Head of caudate nucleus (tissue), 42 donors: ENCODE measurements at regions of chr18 and their contacts with region 1.

Region 1: DNA sequence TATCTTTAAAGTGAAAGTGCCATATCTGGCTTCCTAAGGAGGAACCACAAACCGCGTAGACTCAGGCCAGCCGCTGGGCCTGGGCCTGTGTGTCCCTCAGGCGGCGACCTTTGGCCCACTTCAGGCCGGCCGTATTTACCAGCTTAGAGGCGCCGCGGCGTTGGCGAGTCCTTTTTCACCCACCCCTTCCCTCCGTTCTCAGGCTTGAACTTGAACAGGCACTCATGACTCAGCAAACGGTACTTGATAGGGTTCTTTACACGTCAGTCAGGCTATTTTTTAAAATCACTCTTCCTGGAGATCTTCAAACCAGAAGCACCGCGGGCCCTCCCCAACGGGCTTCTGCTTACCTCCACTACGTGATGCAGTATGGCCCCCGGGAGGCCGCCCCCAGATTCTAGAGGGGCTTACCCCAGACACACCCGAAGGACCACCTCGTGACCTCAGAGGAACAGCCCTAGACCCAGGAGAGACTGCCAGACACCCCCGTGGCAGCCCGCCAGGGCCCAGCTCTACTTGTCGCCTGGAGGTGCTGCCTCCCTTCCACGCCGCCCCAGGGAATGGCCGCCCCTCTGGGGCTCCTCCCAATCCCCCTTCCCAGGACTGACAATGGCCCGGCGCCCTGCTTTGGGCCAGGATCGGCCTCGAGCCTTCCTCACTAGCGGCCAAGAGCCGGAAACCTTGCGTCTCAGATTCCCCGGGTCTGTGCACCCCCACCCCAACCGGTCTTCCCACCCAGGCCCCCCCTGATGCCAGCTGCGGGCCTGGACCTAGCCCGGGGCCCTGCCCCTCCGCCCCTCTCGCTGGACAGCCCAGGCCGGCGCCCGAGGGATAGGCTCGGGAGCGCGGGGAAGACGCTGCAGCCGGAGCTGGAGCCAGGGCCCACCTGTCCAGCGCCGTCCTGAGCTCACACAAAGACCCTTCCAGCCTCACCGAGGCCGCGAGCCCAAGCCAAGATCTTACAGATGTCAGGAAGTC is 33.8 kb upstream of the IMPA2 start:
- DNase-seq: peak; percentile 67 to 94 (median 85)

Region 2: DNA sequence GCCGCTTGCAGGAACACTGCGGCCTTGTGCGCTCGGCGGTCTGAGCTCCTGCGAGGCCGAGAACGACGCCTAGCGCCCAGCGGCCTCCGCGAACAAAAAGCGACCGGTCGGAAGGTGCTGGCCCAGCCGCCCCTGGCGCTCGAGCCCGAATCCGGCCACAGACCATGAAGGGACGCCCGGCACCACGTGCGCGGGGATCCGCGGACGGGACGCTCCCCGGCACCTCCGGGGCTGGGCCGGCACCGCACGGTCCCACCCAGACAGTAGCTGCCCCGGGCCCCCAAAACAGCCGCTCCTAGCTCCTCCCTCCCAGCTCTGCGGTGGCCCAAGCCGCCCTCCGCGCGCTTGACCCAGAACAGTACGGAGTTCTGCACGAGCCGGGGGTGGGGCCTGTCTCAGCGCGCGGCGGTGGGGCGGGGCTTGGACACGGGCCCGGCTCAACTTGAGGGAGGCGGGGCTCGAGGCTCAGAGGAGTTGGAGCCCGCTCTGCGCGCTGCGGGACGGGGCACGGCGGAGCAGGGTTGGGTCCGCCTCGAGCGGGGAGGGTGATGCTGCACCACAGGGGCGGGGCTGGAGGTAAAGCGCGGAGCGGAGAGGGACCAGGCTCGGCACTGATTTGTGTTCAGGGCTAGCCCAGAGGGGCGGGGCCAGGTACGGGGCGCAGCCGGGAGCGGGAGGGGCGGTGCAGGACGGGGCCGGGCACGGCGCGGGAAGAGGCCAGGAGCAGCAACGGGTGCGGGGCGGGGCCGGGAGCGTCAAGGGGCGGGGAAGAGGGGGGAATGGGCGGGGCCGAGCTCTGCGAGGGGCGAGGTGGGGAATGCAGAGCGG is 33.3 kb after region 1 on chr18:
- intact Hi-C with region 1: loop called (anchors 5 kb)
- DNase-seq: peak; percentile 65 to 94 (median 87)